CD8-positive, alpha-beta memory T cell (primary cell): ENCODE measurements at regions of chr1 and their contacts with region 1.

Region 1: DNA sequence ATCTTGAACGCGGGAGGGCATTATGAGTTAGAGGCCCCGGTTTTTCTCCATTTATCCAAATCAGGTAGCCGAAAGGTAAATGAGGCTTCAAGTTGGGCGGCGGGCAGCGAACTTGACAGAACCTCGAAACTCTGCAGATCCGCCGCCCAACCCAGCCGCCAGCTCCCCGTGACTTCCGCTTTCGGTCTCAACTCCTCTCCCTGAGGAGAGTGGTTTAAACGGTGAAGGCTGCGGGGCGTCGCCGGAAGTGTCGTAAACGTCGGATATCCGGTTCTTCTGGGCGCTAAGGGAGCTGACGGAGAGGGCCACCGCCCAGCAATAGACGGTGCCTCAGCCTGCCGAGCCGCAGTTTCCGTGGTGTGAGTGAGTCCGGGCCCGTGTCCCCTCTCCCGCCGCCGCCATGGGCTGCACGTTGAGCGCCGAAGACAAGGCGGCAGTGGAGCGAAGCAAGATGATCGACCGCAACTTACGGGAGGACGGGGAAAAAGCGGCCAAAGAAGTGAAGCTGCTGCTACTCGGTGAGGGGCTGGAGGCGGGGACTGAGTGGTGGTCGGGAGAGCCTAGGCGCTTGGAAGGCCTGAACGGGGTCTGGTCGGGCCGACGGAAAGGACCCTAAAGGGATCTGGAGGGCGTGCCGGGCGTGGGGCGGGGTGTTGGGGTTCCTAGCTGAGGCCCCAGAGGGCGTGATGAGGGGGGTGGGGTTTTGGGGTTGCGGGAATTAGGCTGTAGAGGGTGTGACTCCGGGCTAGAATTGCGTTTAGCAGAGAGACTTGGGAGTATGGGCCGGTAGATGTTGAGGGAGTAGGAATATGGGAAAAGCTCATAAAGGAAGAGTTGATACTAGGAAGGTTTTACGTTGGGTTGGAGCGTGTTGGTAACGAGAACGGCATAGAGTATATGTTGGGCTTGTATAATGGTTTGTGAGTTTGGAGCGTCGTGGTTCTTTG is at the start of gene GNAI3:
- DNase-seq: peak; percentile 93 to 98 (median 95)
- H3K4me3 ChIP-seq: peak within 1 kb of the TSS; percentile 97
- H3K4me3 Mint-ChIP-seq: peak within 1 kb of the TSS; percentile 88 to 100 (median 98)
- H3K27ac ChIP-seq: peak within 1 kb of the TSS; percentile 98
- H3K27ac Mint-ChIP-seq: peak within 1 kb of the TSS; percentile 95 to 100 (median 99)
- H3K4me1 ChIP-seq: peaks cover 37% of the 10 kb centered on the region
- H3K4me1 Mint-ChIP-seq: peaks cover 58 to 69% (median 65%) of the 10 kb centered on the region in 3 donors
- H3K27me3 ChIP-seq: no peaks in the 10 kb centered on the region
- H3K27me3 Mint-ChIP-seq: no peaks in the 10 kb centered on the region
- total RNA-seq, gene GNAI3: 9.8 to 9.9 TPM

Region 2: DNA sequence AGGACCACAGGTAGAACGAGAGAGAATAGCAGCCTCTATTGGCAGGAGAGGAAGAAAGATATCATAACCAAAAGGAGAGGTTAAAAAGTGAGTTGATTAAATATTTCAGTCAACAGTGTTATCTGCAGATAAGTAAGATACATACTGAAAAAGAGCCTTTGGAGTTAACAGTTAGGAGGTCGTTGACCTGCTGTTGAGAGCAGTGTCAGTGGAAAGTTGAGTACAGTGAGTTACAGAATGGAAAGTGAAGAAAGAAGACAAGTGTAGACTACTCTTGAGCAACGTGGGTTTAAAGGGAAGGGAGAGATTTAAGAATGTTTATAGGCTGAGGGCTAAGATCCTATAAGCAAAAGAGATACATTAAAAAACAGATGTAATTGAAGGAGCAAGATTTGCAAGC is 40.6 kb after region 1 on chr1:
- CTCF ChIA-PET with region 1: no interaction called
- POLR2A ChIA-PET with region 1: no interaction called
- DNase-seq: no peak
- H3K4me3 ChIP-seq: no peak overlapping the region
- H3K4me3 Mint-ChIP-seq: no peak overlapping the region
- H3K27ac ChIP-seq: no peak overlapping the region
- H3K27ac Mint-ChIP-seq: peak overlapping the region in 3 of 8 donors; percentile 15 to 77 (median 24)
- H3K4me1 ChIP-seq: no peaks in the 10 kb centered on the region
- H3K4me1 Mint-ChIP-seq: peaks cover 0 to 8% (median 0%) of the 10 kb centered on the region in 3 donors
- H3K27me3 ChIP-seq: no peaks in the 10 kb centered on the region
- H3K27me3 Mint-ChIP-seq: no peaks in the 10 kb centered on the region

Region 3: DNA sequence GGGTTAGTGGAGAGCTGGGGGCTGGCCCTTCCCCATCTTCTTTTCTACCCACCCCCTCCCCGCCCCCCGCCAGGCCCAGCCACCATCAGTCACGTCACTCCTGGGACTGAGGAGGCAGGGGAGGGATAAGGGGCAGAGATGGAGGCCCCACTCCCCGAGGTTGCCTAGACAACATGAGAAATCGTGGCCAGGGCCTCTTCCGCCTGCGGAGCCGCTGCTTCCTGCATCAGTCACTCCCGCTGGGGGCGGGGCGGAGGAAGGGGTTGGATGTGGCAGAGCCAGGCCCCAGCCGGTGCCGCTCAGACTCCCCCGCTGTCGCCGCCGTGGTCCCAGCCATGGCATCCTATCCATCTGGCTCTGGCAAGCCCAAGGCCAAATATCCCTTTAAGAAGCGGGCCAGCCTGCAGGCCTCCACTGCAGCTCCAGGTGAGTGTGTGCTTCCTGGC is 72.3 kb after region 1 on chr1:
- CTCF ChIA-PET with region 1: interaction called, 13 read pairs
- POLR2A ChIA-PET with region 1: interaction called, 12 read pairs
- DNase-seq: peak; percentile 95 to 99 (median 96)
- H3K4me3 ChIP-seq: peak overlapping the region; percentile 94
- H3K4me3 Mint-ChIP-seq: peak overlapping the region; percentile 91 to 100 (median 97)
- H3K27ac ChIP-seq: peak overlapping the region; percentile 91
- H3K27ac Mint-ChIP-seq: peak overlapping the region; percentile 91 to 99 (median 98)
- H3K4me1 ChIP-seq: peaks cover 58% of the 10 kb centered on the region
- H3K4me1 Mint-ChIP-seq: peaks cover 62 to 77% (median 65%) of the 10 kb centered on the region in 3 donors
- H3K27me3 ChIP-seq: no peaks in the 10 kb centered on the region
- H3K27me3 Mint-ChIP-seq: peaks cover 0 to 2% of the 10 kb centered on the region in 2 donors

Region 4: GRCh38 chr1:109636201-109636952 is 87.8 kb after region 1 on chr1:
- CTCF ChIA-PET with region 1: interaction called, 55 read pairs
- POLR2A ChIA-PET with region 1: interaction called, 6 read pairs
- DNase-seq: no peak
- H3K4me3 ChIP-seq: no peak overlapping the region
- H3K4me3 Mint-ChIP-seq: no peak overlapping the region
- H3K27ac ChIP-seq: no peak overlapping the region
- H3K27ac Mint-ChIP-seq: no peak overlapping the region
- H3K4me1 ChIP-seq: peaks cover 9% of the 10 kb centered on the region
- H3K4me1 Mint-ChIP-seq: peaks cover 10 to 16% (median 12%) of the 10 kb centered on the region in 3 donors
- H3K27me3 ChIP-seq: no peaks in the 10 kb centered on the region
- H3K27me3 Mint-ChIP-seq: peaks cover 3 to 6% of the 10 kb centered on the region in 2 donors

Region 5: GRCh38 chr1:109649491-109649914 is 100.9 kb after region 1 on chr1:
- CTCF ChIA-PET with region 1: interaction called, 13 read pairs
- POLR2A ChIA-PET with region 1: no interaction called
- DNase-seq: no peak
- H3K4me3 ChIP-seq: no peak overlapping the region
- H3K4me3 Mint-ChIP-seq: peak overlapping the region in 1 of 7 donors; percentile 19
- H3K27ac ChIP-seq: no peak overlapping the region
- H3K27ac Mint-ChIP-seq: no peak overlapping the region
- H3K4me1 ChIP-seq: no peaks in the 10 kb centered on the region
- H3K4me1 Mint-ChIP-seq: no peaks in the 10 kb centered on the region
- H3K27me3 ChIP-seq: no peaks in the 10 kb centered on the region
- H3K27me3 Mint-ChIP-seq: peaks cover 10 to 30% of the 10 kb centered on the region in 2 donors

Region 6: DNA sequence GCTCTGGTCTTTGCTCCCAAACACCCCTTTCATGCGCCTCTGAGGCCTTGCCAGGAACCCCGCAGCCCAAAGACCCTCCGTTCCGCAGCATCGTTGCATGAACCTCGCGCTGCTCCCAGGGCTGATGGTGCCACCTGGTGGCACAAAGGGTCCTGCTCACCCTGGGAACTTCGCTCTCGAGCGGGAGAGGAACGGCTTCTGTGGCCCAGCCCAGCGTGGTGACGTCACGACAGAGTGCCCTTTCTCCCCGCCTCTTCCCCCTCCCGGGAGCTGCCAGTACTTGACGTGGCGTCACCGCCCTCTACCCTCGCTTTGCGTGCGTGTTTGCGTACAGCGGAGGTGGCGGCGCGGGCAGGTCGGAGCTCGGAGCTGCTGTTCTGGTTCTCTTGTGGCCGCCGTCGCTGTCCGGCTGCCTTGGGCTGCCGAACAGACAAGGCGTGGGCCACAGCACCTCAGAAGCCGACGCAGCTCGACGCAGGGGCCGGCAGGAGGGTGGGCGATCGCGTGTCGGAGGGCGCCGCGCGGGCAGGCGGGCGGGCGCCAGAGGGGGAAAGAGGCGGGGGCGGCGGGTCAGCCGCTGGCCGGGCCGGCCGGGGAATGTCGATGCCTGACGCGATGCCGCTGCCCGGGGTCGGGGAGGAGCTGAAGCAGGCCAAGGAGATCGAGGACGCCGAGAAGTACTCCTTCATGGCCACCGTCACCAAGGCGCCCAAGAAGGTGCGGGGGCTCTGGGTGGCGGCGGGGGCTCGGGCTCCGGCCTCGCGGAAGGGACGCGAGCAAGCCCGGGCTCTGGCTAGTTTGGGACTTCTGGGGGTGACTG is 436.1 kb after region 1 on chr1 and contains the start of gene AHCYL1:
- CTCF ChIA-PET with region 1: interaction called, 18 read pairs
- POLR2A ChIA-PET with region 1: interaction called, 8 read pairs
- DNase-seq: peak; percentile 98 to 99 (median 99)
- H3K4me3 ChIP-seq: peak within 1 kb of the TSS; percentile 75
- H3K4me3 Mint-ChIP-seq: peak within 1 kb of the TSS; percentile 92 to 99 (median 97)
- H3K27ac ChIP-seq: peak within 1 kb of the TSS; percentile 77
- H3K27ac Mint-ChIP-seq: peak within 1 kb of the TSS; percentile 68 to 100 (median 99)
- H3K4me1 ChIP-seq: peaks cover 36% of the 10 kb centered on the region
- H3K4me1 Mint-ChIP-seq: peaks cover 38 to 46% (median 44%) of the 10 kb centered on the region in 3 donors
- H3K27me3 ChIP-seq: no peaks in the 10 kb centered on the region
- H3K27me3 Mint-ChIP-seq: peaks cover 0 to 2% of the 10 kb centered on the region in 2 donors
- total RNA-seq, gene AHCYL1: 56.9 to 59.9 TPM